Breast epithelium (tissue), 4 donors: ENCODE measurements at regions of chr1 and their contacts with region 1.

Region 1: GRCh38 chr1:29290414-29290985 is 54.2 kb downstream of the PTPRU start:
- DNase-seq: no peak
- H3K4me3 ChIP-seq: no peak overlapping the region
- H3K27ac ChIP-seq: no peak overlapping the region
- H3K4me1 ChIP-seq: no peaks in the 10 kb centered on the region
- H3K27me3 ChIP-seq: no peaks in the 10 kb centered on the region
- CTCF ChIP-seq: no peak
- POLR2A ChIP-seq: no peak

Region 2: DNA sequence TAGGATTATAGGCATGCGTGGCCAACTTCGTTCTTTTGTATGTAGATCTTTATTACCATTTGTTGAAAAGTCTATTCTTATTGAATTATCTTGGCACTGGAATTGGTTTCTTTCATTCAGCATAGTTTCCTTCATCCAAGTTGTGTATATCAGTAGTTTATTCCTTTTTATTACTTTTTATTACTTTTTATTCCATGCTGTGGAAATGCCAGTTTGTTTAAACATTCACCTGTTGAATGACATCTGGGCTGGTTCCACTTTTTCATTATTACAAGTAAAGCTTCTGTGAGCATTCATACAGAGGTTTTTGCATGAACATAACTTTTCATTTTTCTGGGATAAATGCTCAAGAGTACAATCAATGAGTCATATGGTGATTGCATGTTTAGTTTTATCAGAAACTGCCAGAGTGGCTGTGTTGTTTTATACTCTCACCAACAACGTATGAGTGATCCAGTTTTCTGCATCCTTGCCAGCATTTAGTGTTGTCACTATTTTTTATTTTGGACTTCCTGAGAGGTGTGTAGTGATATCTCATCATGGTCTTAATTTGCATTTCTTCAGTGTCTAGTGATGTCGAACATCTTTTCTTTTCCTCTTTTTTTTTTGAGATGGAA is 25.6 kb before region 1 on chr1:
- intact Hi-C with region 1: loop called (anchors 1 kb)
- DNase-seq: no peak
- H3K4me3 ChIP-seq: no peak overlapping the region
- H3K27ac ChIP-seq: no peak overlapping the region
- H3K4me1 ChIP-seq: no peaks in the 10 kb centered on the region
- H3K27me3 ChIP-seq: no peaks in the 10 kb centered on the region
- CTCF ChIP-seq: no peak
- POLR2A ChIP-seq: no peak

Region 3: GRCh38 chr1:29279951-29280391 is 10.5 kb before region 1 on chr1:
- intact Hi-C with region 1: no loop called
- DNase-seq: no peak
- H3K4me3 ChIP-seq: no peak overlapping the region
- H3K27ac ChIP-seq: no peak overlapping the region
- H3K4me1 ChIP-seq: no peaks in the 10 kb centered on the region
- H3K27me3 ChIP-seq: no peaks in the 10 kb centered on the region
- CTCF ChIP-seq: no peak
- POLR2A ChIP-seq: no peak

Region 4: GRCh38 chr1:29320576-29320975 is 30.1 kb after region 1 on chr1:
- intact Hi-C with region 1: no loop called
- DNase-seq: no peak
- H3K4me3 ChIP-seq: no peak overlapping the region
- H3K27ac ChIP-seq: no peak overlapping the region
- H3K4me1 ChIP-seq: no peaks in the 10 kb centered on the region
- H3K27me3 ChIP-seq: no peaks in the 10 kb centered on the region
- CTCF ChIP-seq: no peak
- POLR2A ChIP-seq: no peak